Caco-2 (cell line): ENCODE measurements at regions of chr3 and their contacts with region 1.

Region 1: DNA sequence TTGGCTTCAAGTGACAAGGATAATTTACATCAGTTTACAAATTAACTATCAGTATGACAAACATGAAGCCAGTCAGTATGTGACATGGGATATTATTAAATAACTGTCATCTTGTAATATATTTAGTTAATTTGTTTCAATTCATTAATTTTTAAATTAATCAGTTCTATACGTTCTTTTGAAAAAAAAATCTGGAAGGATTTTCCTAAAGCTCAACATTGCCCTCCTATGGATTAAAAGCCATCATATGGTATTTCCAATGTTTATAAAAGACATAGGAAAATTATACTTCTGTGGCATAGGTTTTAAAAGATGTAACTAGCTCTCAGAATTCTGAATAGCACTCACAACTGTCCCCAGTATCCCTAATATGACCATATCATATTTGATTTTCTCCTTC is 134.4 kb downstream of the PLOD2 start:
- DNase-seq: no peak
- H3K4me3 ChIP-seq: no peak overlapping the region
- H3K4me3 Mint-ChIP-seq: no peak overlapping the region
- H3K27ac Mint-ChIP-seq: no peak overlapping the region
- H3K4me1 ChIP-seq: no peaks in the 10 kb centered on the region
- H3K4me1 Mint-ChIP-seq: no peaks in the 10 kb centered on the region
- H3K27me3 ChIP-seq: no peaks in the 10 kb centered on the region
- H3K27me3 Mint-ChIP-seq: peaks cover 3% of the 10 kb centered on the region
- CTCF ChIP-seq: no peak

Region 2: DNA sequence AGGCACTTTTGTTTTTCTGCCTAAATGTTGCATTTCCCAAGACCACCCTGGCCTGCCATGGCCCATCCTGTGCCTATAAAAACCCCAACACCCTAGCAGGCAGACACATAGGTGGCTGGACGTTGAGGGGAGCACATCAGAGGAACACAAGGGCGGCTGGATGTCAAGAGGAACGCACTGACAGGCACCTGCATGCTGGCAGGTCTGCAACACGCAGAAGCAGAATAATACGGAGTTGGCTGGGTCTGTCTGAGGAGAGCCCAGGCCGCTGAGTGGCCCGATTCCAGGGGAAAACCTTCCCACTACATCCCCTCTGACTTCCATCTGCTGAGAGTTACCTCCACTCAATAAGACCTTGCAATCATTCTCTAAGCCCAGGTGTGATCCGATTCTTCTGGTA is 631.1 kb before region 1 on chr3:
- CTCF ChIA-PET with region 1: no interaction called
- POLR2A ChIA-PET with region 1: no interaction called
- intact Hi-C with region 1: loop called (anchors 5 kb)
- DNase-seq: no peak
- H3K4me3 ChIP-seq: no peak overlapping the region
- H3K4me3 Mint-ChIP-seq: no peak overlapping the region
- H3K27ac Mint-ChIP-seq: no peak overlapping the region
- H3K4me1 ChIP-seq: no peaks in the 10 kb centered on the region
- H3K4me1 Mint-ChIP-seq: no peaks in the 10 kb centered on the region
- H3K27me3 ChIP-seq: no peaks in the 10 kb centered on the region
- H3K27me3 Mint-ChIP-seq: peaks cover 4% of the 10 kb centered on the region
- CTCF ChIP-seq: no peak

Region 3: GRCh38 chr3:145754605-145755289 is 271.8 kb before region 1 on chr3:
- CTCF ChIA-PET with region 1: no interaction called
- POLR2A ChIA-PET with region 1: no interaction called
- intact Hi-C with region 1: no loop called
- DNase-seq: no peak
- H3K4me3 ChIP-seq: no peak overlapping the region
- H3K4me3 Mint-ChIP-seq: no peak overlapping the region
- H3K27ac Mint-ChIP-seq: no peak overlapping the region
- H3K4me1 ChIP-seq: no peaks in the 10 kb centered on the region
- H3K4me1 Mint-ChIP-seq: no peaks in the 10 kb centered on the region
- H3K27me3 ChIP-seq: no peaks in the 10 kb centered on the region
- H3K27me3 Mint-ChIP-seq: peaks cover 3% of the 10 kb centered on the region
- CTCF ChIP-seq: no peak